ENCODE measurements at regions of chr16 and their contacts with region 1.

Region 1: GRCh38 chr16:68367030-68367429 is 56.2 kb downstream of the PRMT7 start:
- DNase-seq: peak; percentile 70
- H3K4me3 Mint-ChIP-seq: no peak overlapping the region
- H3K27ac Mint-ChIP-seq: no peak overlapping the region
- H3K4me1 Mint-ChIP-seq: peaks cover 42% of the 10 kb centered on the region
- H3K27me3 Mint-ChIP-seq: peaks cover 21% of the 10 kb centered on the region

Region 2: DNA sequence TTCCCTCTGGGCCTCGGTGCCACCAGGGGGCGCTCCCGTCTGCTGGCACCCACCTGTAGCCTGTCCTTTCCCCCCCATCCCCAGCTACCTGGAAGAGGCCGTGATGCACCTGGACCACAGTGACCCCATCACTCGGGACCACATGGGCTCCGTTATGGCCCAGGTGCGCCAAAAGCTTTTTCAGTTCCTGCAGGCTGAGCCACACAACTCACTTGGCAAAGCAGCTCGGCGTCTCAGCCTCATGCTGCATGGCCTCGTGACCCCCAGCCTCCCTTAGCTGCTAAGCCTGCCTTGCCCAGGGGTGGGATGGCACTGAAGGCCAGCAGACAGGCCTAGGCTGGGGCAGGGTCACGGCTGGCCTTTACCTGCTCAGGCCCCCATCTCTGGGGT is 483.2 kb before region 1 on chr16:
- CTCF ChIA-PET with region 1: no interaction called
- POLR2A ChIA-PET with region 1: no interaction called
- DNase-seq: peak; percentile 69
- H3K4me3 Mint-ChIP-seq: no peak overlapping the region
- H3K27ac Mint-ChIP-seq: no peak overlapping the region
- H3K4me1 Mint-ChIP-seq: no peaks in the 10 kb centered on the region
- H3K27me3 Mint-ChIP-seq: no peaks in the 10 kb centered on the region

Region 3: GRCh38 chr16:68345958-68346635 is 20.9 kb before region 1 on chr16:
- CTCF ChIA-PET with region 1: no interaction called
- POLR2A ChIA-PET with region 1: no interaction called
- DNase-seq: no peak
- H3K4me3 Mint-ChIP-seq: no peak overlapping the region
- H3K27ac Mint-ChIP-seq: no peak overlapping the region
- H3K4me1 Mint-ChIP-seq: peaks cover 20% of the 10 kb centered on the region
- H3K27me3 Mint-ChIP-seq: no peaks in the 10 kb centered on the region

Region 4: DNA sequence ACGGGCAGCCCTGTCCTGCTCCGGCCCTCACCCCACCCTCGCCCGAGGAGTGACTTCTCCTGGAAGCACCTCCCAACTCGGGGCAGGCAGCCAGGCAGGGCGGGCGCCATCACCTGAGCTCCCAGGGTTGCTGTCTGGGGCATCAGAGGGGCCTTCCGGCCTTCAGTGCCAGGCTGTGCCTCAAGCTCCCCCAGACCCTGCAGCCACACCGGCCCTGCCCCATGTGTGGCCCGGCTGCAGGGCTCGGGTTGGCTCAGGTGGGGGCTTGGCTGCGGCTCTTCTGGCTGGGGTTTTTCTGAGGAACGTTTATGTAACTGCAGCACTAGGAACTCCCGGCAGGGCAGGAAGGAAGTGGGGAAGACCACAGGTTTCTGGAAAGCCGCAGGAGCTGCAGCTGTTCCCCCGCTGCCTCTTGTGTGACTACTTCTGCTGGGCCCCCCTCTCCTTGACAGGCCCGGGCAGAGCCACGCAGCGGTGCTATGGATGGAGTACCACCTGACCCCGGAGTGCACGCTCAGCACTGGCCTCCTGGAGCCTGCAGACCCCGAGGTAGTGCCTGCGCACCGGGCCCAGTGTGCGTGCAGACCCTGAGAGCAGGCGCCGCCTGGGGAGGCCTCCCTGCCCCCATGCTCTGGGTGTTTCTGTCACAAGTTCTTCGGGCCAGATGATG is 10.6 kb before region 1 on chr16:
- CTCF ChIA-PET with region 1: interaction called, 32 read pairs
- POLR2A ChIA-PET with region 1: interaction called, 3 read pairs
- DNase-seq: peak; percentile 84
- H3K4me3 Mint-ChIP-seq: peak overlapping the region; percentile 56
- H3K27ac Mint-ChIP-seq: peak overlapping the region; percentile 58
- H3K4me1 Mint-ChIP-seq: peaks cover 42% of the 10 kb centered on the region
- H3K27me3 Mint-ChIP-seq: peaks cover 5% of the 10 kb centered on the region